Transverse colon (tissue), 4 donors: ENCODE measurements at regions of chr16 and their contacts with region 1.

Region 1: GRCh38 chr16:70162041-70162451 is 11.5 kb upstream of the CLEC18C start:
- DNase-seq: no peak
- H3K4me3 ChIP-seq: no peak overlapping the region
- H3K27ac ChIP-seq: peak overlapping the region in 2 of 4 donors; percentile 15 to 30
- H3K4me1 ChIP-seq: peaks cover 0 to 14% (median 5%) of the 10 kb centered on the region in 4 donors
- H3K27me3 ChIP-seq: no peaks in the 10 kb centered on the region
- CTCF ChIP-seq: no peak
- EP300 ChIP-seq: no peak
- POLR2A ChIP-seq: no peak

Region 2: DNA sequence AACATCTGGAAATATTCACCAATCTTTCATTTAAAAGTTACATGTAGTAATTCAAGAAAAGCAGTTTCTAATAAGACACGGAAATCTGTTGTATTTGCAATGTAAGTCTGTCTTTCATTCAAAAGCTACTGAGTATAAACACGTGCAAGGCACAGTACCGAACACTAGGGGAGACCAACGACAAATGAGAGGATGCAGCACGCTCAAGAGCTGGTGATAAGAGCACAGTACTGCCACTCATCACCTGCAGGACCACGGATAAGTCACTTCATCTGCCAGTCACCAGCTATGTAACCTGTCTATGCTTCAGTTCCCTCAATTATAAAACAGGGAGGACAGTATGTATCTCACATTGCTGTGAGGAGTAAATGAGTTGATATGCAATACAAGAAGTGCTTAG is 143.8 kb before region 1 on chr16:
- in situ Hi-C with region 1: no loop called
- intact Hi-C with region 1: no loop called
- DNase-seq: peak; percentile 23
- H3K4me3 ChIP-seq: no peak overlapping the region
- H3K27ac ChIP-seq: no peak overlapping the region
- H3K4me1 ChIP-seq: no peaks in the 10 kb centered on the region
- H3K27me3 ChIP-seq: no peaks in the 10 kb centered on the region
- CTCF ChIP-seq: peak in 4 of 5 experiments; percentile 30 to 63 (median 34)
- EP300 ChIP-seq: no peak
- POLR2A ChIP-seq: no peak

Region 3: GRCh38 chr16:70251629-70252354 is 89.7 kb after region 1 on chr16 and contains the start of gene EXOSC6:
- in situ Hi-C with region 1: loop called in 1 of 4 experiments (anchors 25 kb)
- intact Hi-C with region 1: loop called (anchors 10 kb)
- DNase-seq: peak; percentile 92
- H3K4me3 ChIP-seq: peak within 1 kb of the TSS; percentile 65 to 96 (median 71)
- H3K27ac ChIP-seq: peak within 1 kb of the TSS; percentile 90 to 98 (median 94)
- H3K4me1 ChIP-seq: peaks cover 14 to 27% (median 21%) of the 10 kb centered on the region in 4 donors
- H3K27me3 ChIP-seq: no peaks in the 10 kb centered on the region
- CTCF ChIP-seq: peak; percentile 90 to 94 (median 92)
- EP300 ChIP-seq: no peak
- POLR2A ChIP-seq: peak; percentile 88
- total RNA-seq, gene EXOSC6: 11.9 to 28.4 (median 21.9) TPM

Region 4: DNA sequence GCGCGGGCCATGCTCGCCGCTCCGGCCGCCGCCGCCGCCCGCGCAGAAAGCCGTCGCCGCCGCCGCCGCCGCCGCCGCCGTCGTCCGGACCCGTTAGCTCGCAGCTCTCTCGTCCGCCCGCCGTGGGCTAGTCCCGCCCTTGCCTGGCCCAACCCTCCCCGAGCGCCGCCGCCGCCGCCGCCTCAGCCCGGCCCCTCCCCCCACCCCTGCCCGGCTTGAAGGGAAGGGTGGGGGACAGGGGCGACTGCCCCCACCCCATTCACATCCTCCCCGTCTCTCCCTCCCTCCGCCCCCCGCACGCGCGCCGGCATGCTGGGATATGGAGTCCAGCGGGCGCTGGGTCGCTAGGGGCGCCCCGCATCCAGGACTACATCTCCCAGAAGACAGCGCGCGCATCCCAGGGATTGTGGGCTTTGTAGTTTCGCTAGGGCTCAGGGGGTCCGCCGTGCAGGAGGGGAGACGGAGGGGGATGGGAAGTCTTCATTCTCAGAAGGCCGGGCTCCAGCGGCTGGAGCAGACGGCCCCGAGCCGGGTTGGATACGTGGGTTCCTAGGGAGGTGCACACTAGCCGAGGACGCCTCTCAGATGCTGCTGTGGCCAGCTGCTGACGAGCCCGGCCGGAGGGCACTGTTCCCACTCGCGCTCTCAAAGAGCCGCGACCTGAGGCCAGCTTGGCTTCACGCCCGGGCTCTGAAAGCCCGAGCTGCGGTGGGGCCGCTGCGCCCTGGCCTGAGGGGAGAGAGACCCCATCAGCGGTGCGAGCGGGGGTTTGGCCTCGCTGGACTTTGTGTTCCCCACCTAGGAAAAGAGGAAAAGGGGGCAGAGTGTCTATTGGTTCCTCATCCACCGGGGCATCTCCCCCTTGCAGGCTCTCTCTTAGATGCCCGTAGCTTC is 277.2 kb after region 1 on chr16 and contains the start of gene ST3GAL2:
- in situ Hi-C with region 1: no loop called
- intact Hi-C with region 1: no loop called
- DNase-seq: peak; percentile 93
- H3K4me3 ChIP-seq: peak within 1 kb of the TSS; percentile 65 to 76 (median 70)
- H3K27ac ChIP-seq: peak within 1 kb of the TSS; percentile 75 to 87 (median 81)
- H3K4me1 ChIP-seq: peaks cover 7 to 55% (median 25%) of the 10 kb centered on the region in 4 donors
- H3K27me3 ChIP-seq: no peaks in the 10 kb centered on the region
- CTCF ChIP-seq: peak in 3 of 5 experiments; percentile 19 to 33 (median 25)
- EP300 ChIP-seq: no peak
- POLR2A ChIP-seq: no peak
- total RNA-seq, gene ST3GAL2: 2.6 to 16.5 (median 8.5) TPM